ENCODE measurements at regions of chr19 and their contacts with region 1.

Region 1: GRCh38 chr19:57682226-57682766 is 519 bp downstream of the ZNF551 start:
- DNase-seq: no peak

Region 2: DNA sequence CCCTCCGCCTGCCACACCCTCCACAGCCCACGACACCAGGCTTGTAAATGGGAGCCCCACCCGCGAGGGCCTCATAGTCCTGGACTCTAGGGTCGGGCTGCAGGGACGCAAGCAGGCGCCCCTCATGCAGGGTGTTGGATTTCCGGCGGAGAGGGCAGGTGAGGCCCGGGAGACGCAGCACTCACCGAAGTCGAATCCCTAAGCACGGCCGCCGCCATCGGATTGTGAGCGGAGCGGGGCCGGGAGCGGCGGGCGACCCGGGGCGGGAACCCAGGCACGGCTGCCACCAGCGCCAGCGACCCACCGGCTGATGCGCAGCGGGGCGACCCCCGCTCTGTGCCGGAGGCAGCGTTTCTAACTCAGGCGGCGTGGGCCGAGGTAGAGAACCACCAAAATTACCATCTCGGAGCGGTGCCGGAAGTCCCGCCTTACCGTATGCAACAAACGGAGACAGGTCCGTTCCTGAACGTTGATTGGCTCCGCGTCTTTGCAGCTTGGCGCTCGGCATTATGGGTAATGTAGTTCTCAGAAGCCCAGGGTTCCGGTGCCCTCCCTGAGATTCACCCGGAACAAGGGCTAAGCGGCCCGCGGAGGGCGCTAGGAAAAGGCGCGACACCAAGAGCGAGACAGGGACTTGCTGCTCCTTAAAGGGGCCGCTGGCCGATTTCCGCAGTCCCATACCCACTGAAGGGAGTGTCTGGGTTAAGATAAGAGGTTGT is 103.7 kb before region 1 on chr19 and contains the start of gene ZNF416:
- intact Hi-C with region 1: loop called (anchors 5 kb)
- DNase-seq: peak; percentile 92 to 99 (median 97)

Region 3: DNA sequence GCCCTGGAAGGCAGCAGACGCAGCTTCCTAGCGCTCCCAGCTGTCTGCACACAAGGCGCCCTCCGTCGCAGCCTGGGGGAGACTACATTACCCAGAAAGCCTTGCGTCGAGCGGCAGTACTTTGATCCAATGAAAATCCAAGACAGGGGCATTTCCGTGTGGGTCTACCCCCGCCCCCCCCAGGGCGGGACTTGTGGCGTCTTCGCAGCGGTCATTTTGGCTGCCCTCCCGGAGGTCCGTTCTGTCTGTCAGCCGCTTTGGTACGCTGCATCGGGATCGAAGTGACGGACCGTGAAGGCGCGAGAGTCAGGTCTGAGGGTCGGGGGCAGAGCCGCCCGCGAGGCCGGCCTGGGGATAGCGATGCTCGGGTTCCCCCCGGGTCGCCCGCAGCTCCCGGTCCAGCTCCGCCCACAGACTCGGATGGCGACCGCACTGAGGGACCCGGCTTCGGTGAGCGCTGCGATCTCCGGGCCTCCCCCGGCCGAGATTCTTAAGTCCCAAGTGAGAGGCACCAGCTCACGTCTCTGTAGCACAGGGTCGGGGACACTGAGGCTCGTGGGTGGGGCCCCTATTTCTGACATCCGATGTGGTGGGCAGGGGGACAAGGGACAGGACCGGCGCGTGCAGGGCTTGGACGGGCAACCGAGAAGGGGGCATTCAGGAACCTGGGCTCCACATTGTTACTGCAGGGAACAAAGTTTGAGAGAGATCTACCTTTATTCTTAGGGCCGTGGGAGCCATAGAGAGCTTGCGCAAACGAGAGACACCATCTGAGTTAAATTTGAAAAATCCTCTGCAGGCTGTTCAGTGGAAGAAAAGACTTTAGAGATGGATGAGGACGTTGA is 49.1 kb before region 1 on chr19 and contains the start of gene ZNF211:
- intact Hi-C with region 1: loop called (anchors 10 kb)
- DNase-seq: peak; percentile 84 to 99 (median 92)

Measured in posterior cingulate gyrus (tissue), 11 donors.